SK-N-SH (cell line): ENCODE measurements at regions of chr2 and their contacts with region 1.

Region 1: GRCh38 chr2:218017211-218018053 is 14.6 kb upstream of the TNS1 start:
- DNase-seq: peak; percentile 50
- H3K4me3 ChIP-seq: no peak overlapping the region
- H3K27ac ChIP-seq: peak overlapping the region in 1 of 2 experiments; percentile 94; a peak in 2 of 4 replicates
- H3K4me1 ChIP-seq: peaks cover 22 to 59% of the 10 kb centered on the region in 2 experiments; a peak in 3 of 4 replicates
- H3K27me3 ChIP-seq: no peaks in the 10 kb centered on the region
- CTCF ChIP-seq: no peak
- EP300 ChIP-seq: peak in 1 of 2 experiments; percentile 20; a peak in 1 of 4 replicates
- RAD21 ChIP-seq: no peak

Region 2: GRCh38 chr2:218033590-218034496 is 16.4 kb after region 1 on chr2:
- CTCF ChIA-PET with region 1: interaction called, 15 read pairs
- POLR2A ChIA-PET with region 1: interaction called, 5 read pairs
- DNase-seq: no peak
- H3K4me3 ChIP-seq: no peak overlapping the region
- H3K27ac ChIP-seq: no peak overlapping the region
- H3K4me1 ChIP-seq: peaks cover 0 to 24% of the 10 kb centered on the region in 2 experiments; a peak in 1 of 4 replicates
- H3K27me3 ChIP-seq: no peaks in the 10 kb centered on the region
- CTCF ChIP-seq: no peak
- EP300 ChIP-seq: no peak
- RAD21 ChIP-seq: no peak